CD4-positive, alpha-beta T cell (primary cell): ENCODE measurements at regions of chr6 and their contacts with region 1.

Region 1: GRCh38 chr6:26122793-26123674 is 35.8 kb downstream of the HFE start:
- DNase-seq: peak; percentile 75 to 98 (median 92)
- ATAC-seq: peak; percentile 56
- H3K4me3 ChIP-seq: peak overlapping the region; percentile 88
- H3K4me3 Mint-ChIP-seq: peak overlapping the region; percentile 97
- H3K27ac ChIP-seq: peak overlapping the region; percentile 84 to 95
- H3K27ac Mint-ChIP-seq: peak overlapping the region; percentile 98
- H3K4me1 ChIP-seq: peaks cover 23% of the 10 kb centered on the region
- H3K4me1 Mint-ChIP-seq: peaks cover 41% of the 10 kb centered on the region
- H3K27me3 ChIP-seq: no peaks in the 10 kb centered on the region
- H3K27me3 Mint-ChIP-seq: peaks cover 13% of the 10 kb centered on the region
- CTCF ChIP-seq: no peak

Region 2: GRCh38 chr6:26045065-26045927 is 77.7 kb before region 1 on chr6:
- CTCF ChIA-PET with region 1: no interaction called
- POLR2A ChIA-PET with region 1: interaction called, 326 read pairs
- intact Hi-C with region 1: loop called in 1 of 2 experiments (anchors 1 kb)
- DNase-seq: peak; percentile 49 to 96 (median 74)
- ATAC-seq: peak; percentile 55
- H3K4me3 ChIP-seq: peak overlapping the region; percentile 70
- H3K4me3 Mint-ChIP-seq: peak overlapping the region; percentile 97
- H3K27ac ChIP-seq: peak overlapping the region; percentile 71 to 91
- H3K27ac Mint-ChIP-seq: peak overlapping the region; percentile 94
- H3K4me1 ChIP-seq: peaks cover 21% of the 10 kb centered on the region
- H3K4me1 Mint-ChIP-seq: peaks cover 28% of the 10 kb centered on the region
- H3K27me3 ChIP-seq: no peaks in the 10 kb centered on the region
- H3K27me3 Mint-ChIP-seq: no peaks in the 10 kb centered on the region
- CTCF ChIP-seq: no peak

Region 3: DNA sequence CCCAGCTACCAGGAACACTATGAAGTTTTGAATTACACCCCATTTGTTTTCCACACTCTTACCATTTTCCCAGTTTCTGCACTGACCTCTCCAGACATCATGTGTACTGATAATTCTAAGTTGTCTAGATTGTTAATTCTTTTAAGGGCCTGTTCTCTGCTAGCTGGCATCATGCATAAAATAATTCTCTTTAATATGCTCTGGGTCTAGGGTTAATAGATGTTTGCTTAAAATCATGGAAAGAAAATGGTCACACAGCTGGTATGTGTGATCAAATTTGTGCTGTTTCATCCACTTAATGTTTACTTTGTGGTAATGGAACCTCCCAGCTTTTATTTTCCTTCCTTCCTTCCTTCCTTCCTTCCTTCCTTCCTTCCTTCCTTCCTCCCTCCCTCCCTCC is 13.3 kb after region 1 on chr6:
- CTCF ChIA-PET with region 1: interaction called, 3 read pairs
- POLR2A ChIA-PET with region 1: interaction called, 59 read pairs
- intact Hi-C with region 1: no loop called
- DNase-seq: no peak
- ATAC-seq: no peak
- H3K4me3 ChIP-seq: no peak overlapping the region
- H3K4me3 Mint-ChIP-seq: no peak overlapping the region
- H3K27ac ChIP-seq: no peak overlapping the region
- H3K27ac Mint-ChIP-seq: no peak overlapping the region
- H3K4me1 ChIP-seq: peaks cover under 1% of the 10 kb centered on the region
- H3K4me1 Mint-ChIP-seq: peaks cover 43% of the 10 kb centered on the region
- H3K27me3 ChIP-seq: no peaks in the 10 kb centered on the region
- H3K27me3 Mint-ChIP-seq: no peaks in the 10 kb centered on the region
- CTCF ChIP-seq: no peak

Region 4: GRCh38 chr6:26223650-26224546 is 100.9 kb after region 1 on chr6:
- CTCF ChIA-PET with region 1: no interaction called
- POLR2A ChIA-PET with region 1: interaction called, 66 read pairs
- intact Hi-C with region 1: no loop called
- DNase-seq: peak in 13 of 14 experiments; percentile 45 to 93 (median 60)
- ATAC-seq: peak; percentile 87
- H3K4me3 ChIP-seq: peak overlapping the region; percentile 68
- H3K4me3 Mint-ChIP-seq: no peak overlapping the region
- H3K27ac ChIP-seq: peak overlapping the region; percentile 72 to 82
- H3K27ac Mint-ChIP-seq: no peak overlapping the region
- H3K4me1 ChIP-seq: peaks cover 18% of the 10 kb centered on the region
- H3K4me1 Mint-ChIP-seq: peaks cover 5% of the 10 kb centered on the region
- H3K27me3 ChIP-seq: no peaks in the 10 kb centered on the region
- H3K27me3 Mint-ChIP-seq: no peaks in the 10 kb centered on the region
- CTCF ChIP-seq: no peak

Region 5: GRCh38 chr6:26537846-26538571 is 415.0 kb after region 1 on chr6 and contains the start of gene HMGN4:
- CTCF ChIA-PET with region 1: no interaction called
- POLR2A ChIA-PET with region 1: interaction called, 13 read pairs
- intact Hi-C with region 1: no loop called
- DNase-seq: peak; percentile 66 to 97 (median 76)
- ATAC-seq: peak; percentile 70
- H3K4me3 ChIP-seq: peak within 1 kb of the TSS; percentile 93
- H3K4me3 Mint-ChIP-seq: peak within 1 kb of the TSS; percentile 94
- H3K27ac ChIP-seq: peak within 1 kb of the TSS; percentile 84 to 91
- H3K27ac Mint-ChIP-seq: peak within 1 kb of the TSS; percentile 98
- H3K4me1 ChIP-seq: peaks cover 51% of the 10 kb centered on the region
- H3K4me1 Mint-ChIP-seq: peaks cover 57% of the 10 kb centered on the region
- H3K27me3 ChIP-seq: no peaks in the 10 kb centered on the region
- H3K27me3 Mint-ChIP-seq: peaks cover 13% of the 10 kb centered on the region
- CTCF ChIP-seq: no peak
- total RNA-seq, gene HMGN4: 22.7 to 24.8 TPM

Region 6: GRCh38 chr6:27479319-27480182 is 1356.5 kb after region 1 on chr6:
- CTCF ChIA-PET with region 1: no interaction called
- POLR2A ChIA-PET with region 1: interaction called, 11 read pairs
- intact Hi-C with region 1: no loop called
- DNase-seq: peak; percentile 82 to 94 (median 90)
- ATAC-seq: peak; percentile 71
- H3K4me3 ChIP-seq: peak overlapping the region; percentile 62
- H3K4me3 Mint-ChIP-seq: no peak overlapping the region
- H3K27ac ChIP-seq: peak overlapping the region; percentile 93 to 94
- H3K27ac Mint-ChIP-seq: no peak overlapping the region
- H3K4me1 ChIP-seq: peaks cover 16% of the 10 kb centered on the region
- H3K4me1 Mint-ChIP-seq: peaks cover 3% of the 10 kb centered on the region
- H3K27me3 ChIP-seq: no peaks in the 10 kb centered on the region
- H3K27me3 Mint-ChIP-seq: no peaks in the 10 kb centered on the region
- CTCF ChIP-seq: no peak

Region 7: GRCh38 chr6:27871924-27872638 is 1749.0 kb after region 1 on chr6:
- CTCF ChIA-PET with region 1: no interaction called
- POLR2A ChIA-PET with region 1: interaction called, 81 read pairs
- intact Hi-C with region 1: no loop called
- DNase-seq: peak; percentile 71 to 97 (median 82)
- ATAC-seq: peak; percentile 75
- H3K4me3 ChIP-seq: peak overlapping the region; percentile 86
- H3K4me3 Mint-ChIP-seq: peak overlapping the region; percentile 93
- H3K27ac ChIP-seq: peak overlapping the region; percentile 89
- H3K27ac Mint-ChIP-seq: peak overlapping the region; percentile 93
- H3K4me1 ChIP-seq: peaks cover 39% of the 10 kb centered on the region
- H3K4me1 Mint-ChIP-seq: peaks cover 41% of the 10 kb centered on the region
- H3K27me3 ChIP-seq: no peaks in the 10 kb centered on the region
- H3K27me3 Mint-ChIP-seq: no peaks in the 10 kb centered on the region
- CTCF ChIP-seq: peak; percentile 43